ENCODE measurements at regions of chr1 and their contacts with region 1.

Region 1: DNA sequence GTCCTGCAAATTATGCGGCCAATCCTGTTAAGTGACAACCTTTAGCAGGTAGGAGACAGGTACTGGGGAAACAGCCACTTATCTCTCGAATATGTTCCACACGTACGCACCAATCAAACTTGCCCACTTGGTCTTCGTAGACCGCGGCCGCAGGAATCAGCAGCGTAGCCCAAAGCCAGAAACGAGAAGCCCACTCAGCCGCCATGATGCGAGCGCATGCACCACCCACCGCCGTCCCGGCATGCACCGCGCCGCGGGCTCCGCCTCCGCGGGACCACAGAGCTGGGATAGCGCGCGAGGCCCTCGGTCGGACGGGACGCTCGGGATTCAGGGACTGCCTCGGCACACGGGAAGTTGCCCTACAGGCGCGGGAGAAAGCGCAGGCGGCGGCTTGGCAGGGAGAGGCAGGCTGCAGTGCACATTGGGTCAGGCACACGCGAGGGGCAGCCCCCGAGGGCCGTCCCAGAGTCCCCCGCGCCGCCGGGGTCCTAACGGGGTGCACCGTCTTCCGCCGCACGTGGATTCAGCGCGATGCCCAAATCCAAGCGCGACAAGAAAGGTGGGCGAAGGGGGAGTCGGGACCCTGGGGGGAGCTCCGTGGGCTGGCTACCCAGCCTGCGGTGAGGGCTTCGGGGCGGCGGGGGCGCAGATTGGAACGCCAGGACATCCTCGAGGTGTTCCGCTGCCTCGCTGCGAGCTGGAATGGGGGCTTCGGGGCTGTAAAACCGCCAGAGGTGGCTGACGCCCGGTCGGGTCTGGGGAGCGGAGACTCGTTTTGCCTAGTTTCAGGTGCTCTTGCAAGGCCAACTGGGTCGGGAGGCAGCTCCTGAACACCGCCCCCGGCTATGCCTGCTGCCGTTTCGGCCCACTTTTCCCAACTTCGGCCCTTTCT is at the starts of genes EMC1 and MRTO4:
- DNase-seq: peak; percentile 81 to 94 (median 91)
- H3K4me3 ChIP-seq: peak within 1 kb of the TSS; percentile 45 to 100 (median 92)
- H3K27ac ChIP-seq: peak within 1 kb of the TSS; percentile 80 to 100 (median 99)
- H3K27me3 ChIP-seq: no peaks in the 10 kb centered on the region
- CTCF ChIP-seq: peak in 35 of 56 donors; percentile 5 to 54 (median 28)
- total RNA-seq, gene EMC1: 58.6 to 120 (median 88.1) TPM
- total RNA-seq, gene MRTO4: 18.3 to 47.2 (median 30.0) TPM

Region 2: DNA sequence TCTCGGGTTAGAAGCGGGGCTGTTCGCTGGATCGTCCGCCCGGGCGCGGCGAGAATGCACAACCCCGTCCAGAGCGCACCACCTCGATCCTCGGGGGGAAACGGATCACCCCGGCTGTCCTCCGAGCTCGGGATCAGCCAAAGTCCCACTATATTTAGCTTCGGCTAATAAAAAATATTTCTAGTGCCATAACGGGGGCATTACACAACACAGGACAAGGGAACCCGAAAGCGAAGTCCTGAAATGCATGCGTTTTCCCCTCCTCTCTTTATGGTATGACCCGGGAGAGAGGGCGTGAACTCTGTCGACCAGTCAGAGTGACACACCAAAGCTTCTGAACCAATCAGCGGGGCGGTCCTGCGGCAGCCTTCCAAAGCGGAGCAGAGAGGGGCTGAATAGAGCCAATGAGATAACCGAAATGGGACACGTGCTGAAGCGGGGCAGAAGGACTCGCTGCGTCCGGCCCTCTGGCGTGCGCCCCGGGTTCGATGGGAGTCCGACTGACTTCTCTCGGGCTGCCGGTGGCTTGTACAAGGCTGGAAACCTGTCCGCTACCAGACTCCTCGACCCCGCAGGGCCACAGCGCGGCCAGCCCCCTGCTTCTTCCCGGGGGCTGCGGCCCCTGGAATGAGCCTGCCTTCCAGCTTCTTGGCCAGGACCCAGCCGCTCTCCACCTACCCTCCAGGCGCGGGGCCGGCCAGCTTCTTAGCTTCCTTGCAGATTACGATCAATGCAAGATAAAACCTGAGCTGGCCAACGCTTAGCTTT is 348.8 kb before region 1 on chr1 and contains the start of gene ALDH4A1:
- intact Hi-C with region 1: loop called in 1 of 2 experiments (anchors 5 kb)
- DNase-seq: peak; percentile 94 to 100 (median 98)
- H3K4me3 ChIP-seq: peak within 1 kb of the TSS; percentile 64 to 99 (median 88)
- H3K27ac ChIP-seq: peak within 1 kb of the TSS; percentile 46 to 98 (median 91)
- H3K27me3 ChIP-seq: no peaks in the 10 kb centered on the region
- CTCF ChIP-seq: peak in 37 of 56 donors; percentile 7 to 61 (median 32)
- total RNA-seq, gene ALDH4A1: 16.8 to 112 (median 40.4) TPM

Region 3: DNA sequence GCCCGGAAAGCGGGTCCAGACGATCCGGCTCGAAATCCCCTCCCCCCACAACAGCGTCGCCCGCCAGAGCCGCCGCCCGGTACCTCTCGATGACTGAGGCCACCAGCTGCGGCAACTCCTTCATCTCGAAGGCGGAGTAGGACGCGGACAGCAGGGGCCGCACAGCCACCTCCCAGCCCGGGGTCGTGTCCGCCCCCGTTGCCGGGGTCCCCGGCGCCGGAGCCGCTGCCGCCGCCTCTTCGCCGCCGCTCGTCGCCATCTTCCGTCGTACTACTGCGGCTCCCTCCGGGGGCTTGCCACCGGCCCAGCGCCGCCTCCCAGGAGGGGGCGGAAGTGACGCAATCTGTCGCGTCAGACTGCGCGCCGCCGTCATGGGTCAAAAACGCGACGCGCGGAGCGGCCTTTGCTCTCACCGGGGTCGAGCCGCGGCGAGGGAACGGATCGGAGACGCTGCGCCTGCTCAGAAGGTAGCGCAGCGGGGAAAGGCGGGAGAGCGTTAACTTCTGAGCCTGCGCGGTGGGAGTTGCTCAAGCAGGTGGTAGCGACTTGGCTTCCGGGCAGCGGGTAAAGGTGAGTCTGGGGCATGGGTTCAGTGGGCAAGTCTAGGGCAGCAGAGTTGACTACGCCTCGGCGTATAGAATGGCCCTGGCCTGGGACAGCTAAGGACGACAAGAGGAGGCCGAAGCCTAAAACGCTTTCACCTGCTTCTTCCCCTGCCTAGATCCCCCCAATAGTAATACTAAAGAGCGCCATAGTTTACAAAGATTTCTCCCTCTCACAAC is 41.4 kb before region 1 on chr1 and contains the start of gene UBR4:
- intact Hi-C with region 1: loop called (anchors 5 kb)
- DNase-seq: peak; percentile 86 to 96 (median 92)
- H3K4me3 ChIP-seq: peak within 1 kb of the TSS; percentile 72 to 100 (median 93)
- H3K27ac ChIP-seq: peak within 1 kb of the TSS; percentile 43 to 98 (median 90)
- H3K27me3 ChIP-seq: no peaks in the 10 kb centered on the region
- CTCF ChIP-seq: peak in 33 of 56 donors; percentile 4 to 58 (median 25)
- total RNA-seq, gene UBR4: 143 to 247 (median 184) TPM

Region 4: GRCh38 chr1:19289244-19289643 is 37.7 kb after region 1 on chr1:
- intact Hi-C with region 1: no loop called
- DNase-seq: no peak
- H3K4me3 ChIP-seq: peak overlapping the region in 50 of 59 donors; percentile 19 to 71 (median 53)
- H3K27ac ChIP-seq: no peak overlapping the region
- H3K27me3 ChIP-seq: no peaks in the 10 kb centered on the region
- CTCF ChIP-seq: no peak